ENCODE measurements at regions of chr15 and their contacts with region 1.

Region 1: GRCh38 chr15:90862964-90863778 is 5.2 kb upstream of the FURIN start:
- DNase-seq: peak; percentile 95
- H3K4me3 Mint-ChIP-seq: peak overlapping the region; percentile 6
- H3K27ac Mint-ChIP-seq: peak overlapping the region; percentile 82
- H3K4me1 Mint-ChIP-seq: peaks cover 28% of the 10 kb centered on the region
- H3K27me3 Mint-ChIP-seq: no peaks in the 10 kb centered on the region
- CTCF ChIP-seq: no peak

Region 2: DNA sequence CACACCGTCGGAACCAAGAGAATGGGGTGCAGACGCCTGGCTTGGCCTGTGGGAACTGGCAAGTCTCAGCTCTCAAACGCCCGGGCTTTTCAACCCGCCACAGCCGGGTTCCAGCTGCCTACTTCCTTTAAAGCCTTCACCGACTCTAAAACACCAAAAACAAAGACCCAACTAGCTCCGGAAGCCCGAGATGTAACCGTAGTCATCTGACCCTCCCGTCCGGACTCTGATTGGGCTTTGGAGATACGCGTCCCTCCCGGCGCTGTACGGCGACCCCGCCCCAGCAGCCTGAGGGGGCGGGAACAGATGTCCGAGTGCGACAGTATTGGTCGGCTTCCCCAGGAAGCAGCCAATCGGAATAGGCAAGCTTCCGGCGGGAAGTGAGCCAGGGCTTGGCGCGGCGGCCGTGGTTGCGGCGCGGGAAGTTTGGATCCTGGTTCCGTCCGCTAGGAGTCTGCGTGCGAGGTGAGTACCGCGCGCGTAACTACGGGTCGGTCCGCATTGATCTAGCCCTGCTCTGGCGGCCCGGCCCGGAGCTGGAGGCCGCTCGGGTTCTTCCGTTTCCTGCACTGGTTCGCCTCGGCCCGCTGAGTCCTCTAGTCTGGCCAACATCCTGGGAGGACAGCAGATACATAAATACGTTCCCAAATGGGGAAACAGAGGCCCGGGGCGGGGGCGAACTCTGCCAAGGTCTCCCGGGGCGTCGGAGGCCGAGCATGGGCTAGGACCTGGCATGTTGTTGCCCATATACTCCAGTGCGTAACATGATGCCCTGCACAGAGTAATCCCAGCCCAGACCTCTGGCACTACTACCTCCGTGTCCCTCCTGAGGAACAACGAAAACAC is 146.0 kb before region 1 on chr15 and contains the start of gene BLM:
- CTCF ChIA-PET with region 1: no interaction called
- POLR2A ChIA-PET with region 1: interaction called, 15 read pairs
- intact Hi-C with region 1: no loop called
- DNase-seq: peak; percentile 97
- H3K4me3 Mint-ChIP-seq: peak within 1 kb of the TSS; percentile 95
- H3K27ac Mint-ChIP-seq: peak within 1 kb of the TSS; percentile 88
- H3K4me1 Mint-ChIP-seq: peaks cover 13% of the 10 kb centered on the region
- H3K27me3 Mint-ChIP-seq: no peaks in the 10 kb centered on the region
- CTCF ChIP-seq: peak; percentile 22
- total RNA-seq, gene BLM: 2.8 and 5.2 TPM in 2 replicates

Measured in MCF 10A (cell line).